ENCODE measurements at regions of chr11 and their contacts with region 1.

Region 1: GRCh38 chr11:102513869-102514268 is 16.7 kb downstream of the MMP7 start:
- DNase-seq: no peak
- H3K4me3 ChIP-seq: no peak overlapping the region
- H3K27ac ChIP-seq: no peak overlapping the region
- H3K4me1 ChIP-seq: no peaks in the 10 kb centered on the region
- CTCF ChIP-seq: no peak

Region 2: DNA sequence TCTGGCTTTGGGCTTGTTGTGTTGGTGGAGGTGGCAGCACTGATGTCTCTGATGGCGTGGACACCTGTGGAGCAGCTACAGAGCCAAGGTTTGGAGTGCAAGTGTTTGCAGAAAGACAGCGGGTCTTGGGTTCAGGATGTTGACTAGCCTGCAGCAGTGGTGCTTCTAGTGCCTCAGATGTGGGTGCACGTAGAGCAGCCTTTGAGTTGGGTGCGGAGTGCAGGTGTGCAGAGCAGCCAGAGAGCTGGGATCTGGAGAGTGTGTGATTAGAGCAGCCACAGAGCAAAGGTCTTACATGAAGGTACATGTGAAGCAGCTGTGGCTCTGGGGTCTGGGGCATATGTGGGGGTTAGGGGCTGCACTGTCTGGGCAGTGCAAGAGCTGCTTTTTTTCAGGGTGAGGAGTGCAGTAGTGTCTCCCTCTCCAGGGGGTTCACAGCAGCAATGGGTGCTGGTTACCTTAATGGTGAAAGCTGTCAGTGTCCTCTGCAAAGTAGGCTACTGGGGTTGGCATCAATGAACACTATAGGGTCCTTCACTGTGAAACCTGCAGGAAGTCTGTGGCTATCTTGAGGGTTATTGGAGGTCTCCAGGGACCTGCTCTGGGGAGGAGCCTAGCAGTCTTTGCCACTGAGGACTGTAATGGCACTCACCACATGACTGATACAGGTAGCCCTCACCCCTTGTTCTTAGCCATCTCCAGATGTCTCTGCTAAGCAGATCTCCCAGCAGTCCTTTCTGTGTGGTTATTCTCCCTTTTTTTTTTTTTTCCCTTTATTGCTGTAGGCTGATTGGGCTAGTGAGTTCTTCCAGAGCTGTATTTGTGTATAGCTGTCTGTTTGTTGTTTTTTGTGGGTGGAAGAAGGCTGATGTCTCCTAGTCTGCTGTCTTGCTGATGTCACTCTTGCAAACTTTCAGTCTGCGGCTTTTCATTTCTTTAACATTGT is 152.5 kb before region 1 on chr11:
- CTCF ChIA-PET with region 1: no interaction called
- POLR2A ChIA-PET with region 1: no interaction called
- intact Hi-C with region 1: no loop called
- DNase-seq: peak; percentile 62
- H3K4me3 ChIP-seq: no peak overlapping the region
- H3K27ac ChIP-seq: no peak overlapping the region
- H3K4me1 ChIP-seq: peaks cover 16% of the 10 kb centered on the region
- CTCF ChIP-seq: no peak

Region 3: DNA sequence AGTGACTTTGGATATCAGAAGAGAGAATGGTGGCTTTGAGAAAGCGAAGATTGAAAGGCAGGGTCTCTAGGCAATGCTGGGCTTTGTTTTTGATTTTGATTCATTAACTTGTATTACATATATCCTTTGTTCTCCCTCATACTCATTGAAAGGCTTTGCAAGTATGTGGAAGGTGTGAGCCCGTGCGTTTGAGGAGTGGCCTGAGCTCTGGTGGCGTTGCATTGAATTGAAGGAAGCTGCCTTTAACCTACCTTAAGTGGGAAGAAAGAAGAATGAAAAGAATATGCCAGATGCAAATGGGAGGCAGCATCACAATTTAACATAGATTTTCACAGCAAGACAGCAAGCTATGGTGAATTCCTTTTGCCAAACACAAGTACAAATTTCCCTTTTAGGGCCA is 10.0 kb after region 1 on chr11:
- CTCF ChIA-PET with region 1: no interaction called
- POLR2A ChIA-PET with region 1: interaction called, 11 read pairs
- intact Hi-C with region 1: no loop called
- DNase-seq: no peak
- H3K4me3 ChIP-seq: no peak overlapping the region
- H3K27ac ChIP-seq: no peak overlapping the region
- H3K4me1 ChIP-seq: peaks cover 5% of the 10 kb centered on the region
- CTCF ChIP-seq: no peak